Left colon (tissue), 2 donors: ENCODE measurements at regions of chr1 and their contacts with region 1.

Region 1: GRCh38 chr1:20358761-20359263 is 68.1 kb downstream of the VWA5B1 start:
- DNase-seq: peak; percentile 83 to 85
- ATAC-seq: peak; percentile 95

Region 2: GRCh38 chr1:20212685-20213331 is 146.0 kb before region 1 on chr1:
- intact Hi-C with region 1: loop called in 1 of 2 experiments (anchors 10 kb)
- DNase-seq: peak; percentile 76 to 79
- ATAC-seq: peak; percentile 74

Region 3: DNA sequence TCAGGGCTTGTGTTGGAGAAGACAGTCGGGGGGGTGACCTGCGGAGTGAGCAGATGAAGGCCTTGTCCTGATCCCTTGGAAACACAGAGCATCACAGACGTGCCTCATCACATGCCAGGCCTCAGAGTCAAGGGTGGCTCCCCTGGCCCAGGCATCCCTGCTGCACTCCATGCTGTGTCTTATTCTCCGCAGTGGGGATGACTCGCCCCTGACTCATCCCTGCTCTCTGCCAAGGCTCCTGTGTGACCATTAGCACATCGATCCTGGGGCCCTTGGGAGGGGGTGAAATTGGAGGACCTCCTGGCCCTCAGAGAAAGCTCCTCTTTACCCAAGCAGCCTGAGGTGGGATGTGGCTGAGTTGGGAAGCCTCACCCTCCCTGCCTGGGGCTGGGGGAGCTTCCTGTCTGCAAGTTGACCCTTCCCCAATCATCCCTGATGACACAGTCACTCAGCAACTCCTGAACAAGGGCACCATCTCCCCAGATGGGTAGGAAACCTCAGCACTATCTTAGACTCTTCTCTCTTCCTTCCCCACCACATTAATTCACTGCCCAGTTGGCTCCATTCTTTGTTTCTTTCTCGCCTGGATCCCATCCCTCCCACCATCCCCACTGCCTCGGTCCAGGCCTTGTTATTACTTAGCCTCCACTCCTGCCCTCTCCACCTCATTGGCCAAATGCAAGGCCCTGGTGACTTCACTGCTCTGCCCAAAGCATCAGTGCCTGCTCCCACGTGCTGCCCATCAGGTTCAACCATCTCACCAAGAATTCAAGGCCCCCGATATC is 52.6 kb after region 1 on chr1:
- intact Hi-C with region 1: no loop called
- DNase-seq: no peak
- ATAC-seq: no peak

Region 4: GRCh38 chr1:20702416-20702815 is 343.6 kb after region 1 on chr1:
- intact Hi-C with region 1: no loop called
- DNase-seq: no peak
- ATAC-seq: no peak